ENCODE measurements at regions of chr6 and their contacts with region 1.

Region 1: GRCh38 chr6:108689247-108690161 is 128.8 kb downstream of the FOXO3 start:
- DNase-seq: peak; percentile 88 to 96
- ATAC-seq: peak; percentile 87 to 91 (median 88)
- H3K4me3 ChIP-seq: no peak overlapping the region
- H3K27ac ChIP-seq: peak overlapping the region; percentile 85
- H3K4me1 ChIP-seq: peaks cover 46% of the 10 kb centered on the region
- H3K27me3 ChIP-seq: no peaks in the 10 kb centered on the region
- CTCF ChIP-seq: no peak

Region 2: GRCh38 chr6:108655806-108656651 is 33.5 kb before region 1 on chr6:
- intact Hi-C with region 1: no loop called
- DNase-seq: no peak
- ATAC-seq: peak; percentile 32 to 55 (median 48)
- H3K4me3 ChIP-seq: peak overlapping the region; percentile 66
- H3K27ac ChIP-seq: peak overlapping the region; percentile 84
- H3K4me1 ChIP-seq: peaks cover 91% of the 10 kb centered on the region
- H3K27me3 ChIP-seq: no peaks in the 10 kb centered on the region
- CTCF ChIP-seq: no peak

Region 3: GRCh38 chr6:108732136-108732885 is 42.8 kb after region 1 on chr6:
- intact Hi-C with region 1: loop called in 1 of 2 experiments (anchors 5 kb)
- DNase-seq: no peak
- ATAC-seq: peak in 2 of 4 donors; percentile 36 to 57
- H3K4me3 ChIP-seq: no peak overlapping the region
- H3K27ac ChIP-seq: no peak overlapping the region
- H3K4me1 ChIP-seq: peaks cover 14% of the 10 kb centered on the region
- H3K27me3 ChIP-seq: no peaks in the 10 kb centered on the region
- CTCF ChIP-seq: no peak

Region 4: DNA sequence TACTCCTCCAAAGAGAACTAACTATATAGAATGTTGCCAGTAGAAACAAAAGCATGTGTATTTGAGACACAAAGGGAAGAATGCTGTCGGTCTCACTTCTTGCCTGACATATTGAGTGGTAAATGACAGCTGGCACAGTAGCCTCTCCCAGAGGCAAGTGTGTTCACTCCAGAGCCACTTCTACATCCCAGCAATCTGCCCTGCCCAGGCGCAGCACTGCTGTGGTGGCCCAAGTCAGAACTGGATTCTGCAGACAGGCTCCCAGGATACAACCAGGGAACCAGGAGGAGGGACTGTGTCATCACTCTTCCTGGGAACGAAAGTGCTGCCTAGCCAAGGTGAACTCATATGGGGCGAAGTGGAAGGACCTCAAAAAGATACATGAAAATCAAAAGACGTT is 55.5 kb after region 1 on chr6:
- intact Hi-C with region 1: no loop called
- DNase-seq: no peak
- ATAC-seq: peak in 1 of 4 donors; percentile 30
- H3K4me3 ChIP-seq: no peak overlapping the region
- H3K27ac ChIP-seq: no peak overlapping the region
- H3K4me1 ChIP-seq: peaks cover 17% of the 10 kb centered on the region
- H3K27me3 ChIP-seq: no peaks in the 10 kb centered on the region
- CTCF ChIP-seq: no peak

Measured in psoas muscle (tissue), 8 donors.